ENCODE measurements at regions of chr13 and their contacts with region 1.

Region 1: DNA sequence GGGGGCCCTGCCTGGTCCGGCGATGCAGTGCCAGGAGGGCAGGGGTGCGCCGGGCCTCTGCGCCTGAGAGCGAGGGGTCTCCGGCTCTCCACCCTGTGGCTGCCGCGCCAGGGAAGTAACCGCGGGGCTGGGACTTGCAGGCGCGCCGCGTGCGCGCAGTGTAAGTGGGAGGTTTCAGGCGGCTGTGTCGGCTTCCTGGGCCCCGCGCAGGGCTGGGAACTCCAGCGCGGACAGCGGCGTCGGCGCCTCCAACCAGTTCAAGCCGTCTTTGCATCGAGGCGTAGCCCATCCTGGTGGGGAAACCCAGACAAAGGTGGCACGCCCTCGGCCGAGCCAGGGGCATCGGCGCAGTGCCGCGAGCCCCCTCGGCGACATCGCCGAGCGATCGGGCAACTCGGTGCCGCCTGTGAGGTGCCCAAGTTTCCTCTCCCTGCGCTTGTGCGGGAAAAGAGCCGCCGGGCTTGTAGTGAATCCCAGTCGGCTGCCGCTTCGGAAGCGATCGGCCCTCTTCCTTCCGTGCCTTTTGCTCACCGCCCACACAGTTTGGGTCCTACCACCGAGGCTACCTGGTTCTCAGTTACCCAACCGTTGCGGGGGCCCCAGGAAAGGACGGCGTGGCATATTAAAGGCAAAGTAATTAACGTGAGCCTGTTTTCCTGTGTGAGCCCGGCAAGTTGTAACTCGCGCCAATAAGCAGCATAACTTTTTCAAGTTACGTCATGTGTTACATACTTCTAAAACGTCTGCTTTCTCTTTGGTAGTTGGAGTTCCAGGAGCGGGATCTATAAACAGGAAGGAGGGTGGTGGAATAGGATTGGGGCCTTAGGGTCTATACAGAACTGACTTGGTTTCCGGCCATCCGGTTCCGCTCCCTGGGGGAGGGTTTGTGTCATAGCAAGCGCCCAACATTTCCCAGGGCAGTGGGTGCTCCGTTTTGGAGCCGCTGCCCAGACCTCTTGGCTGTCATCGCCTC is 1.2 kb downstream of the LRCH1 start:
- DNase-seq: peak; percentile 88
- ATAC-seq: peak; percentile 56
- H3K4me3 ChIP-seq: peak overlapping the region; percentile 87 to 97 (median 95)
- H3K4me3 Mint-ChIP-seq: peak overlapping the region; percentile 95
- H3K27ac ChIP-seq: peak overlapping the region; percentile 89 to 95
- H3K27ac Mint-ChIP-seq: peak overlapping the region; percentile 93
- H3K4me1 ChIP-seq: peaks cover 32 to 34% of the 10 kb centered on the region in 2 donors
- H3K4me1 Mint-ChIP-seq: peaks cover 55% of the 10 kb centered on the region
- H3K27me3 ChIP-seq: no peaks in the 10 kb centered on the region
- H3K27me3 Mint-ChIP-seq: no peaks in the 10 kb centered on the region
- CTCF ChIP-seq: peak; percentile 35

Region 2: GRCh38 chr13:46492946-46493345 is 61.2 kb before region 1 on chr13:
- CTCF ChIA-PET with region 1: interaction called, 11 read pairs
- POLR2A ChIA-PET with region 1: no interaction called
- intact Hi-C with region 1: loop called (anchors 5 kb)
- DNase-seq: peak; percentile 56
- ATAC-seq: no peak
- H3K4me3 ChIP-seq: no peak overlapping the region
- H3K4me3 Mint-ChIP-seq: no peak overlapping the region
- H3K27ac ChIP-seq: no peak overlapping the region
- H3K27ac Mint-ChIP-seq: no peak overlapping the region
- H3K4me1 ChIP-seq: no peaks in the 10 kb centered on the region
- H3K4me1 Mint-ChIP-seq: no peaks in the 10 kb centered on the region
- H3K27me3 ChIP-seq: no peaks in the 10 kb centered on the region
- H3K27me3 Mint-ChIP-seq: no peaks in the 10 kb centered on the region
- CTCF ChIP-seq: peak; percentile 83

Region 3: DNA sequence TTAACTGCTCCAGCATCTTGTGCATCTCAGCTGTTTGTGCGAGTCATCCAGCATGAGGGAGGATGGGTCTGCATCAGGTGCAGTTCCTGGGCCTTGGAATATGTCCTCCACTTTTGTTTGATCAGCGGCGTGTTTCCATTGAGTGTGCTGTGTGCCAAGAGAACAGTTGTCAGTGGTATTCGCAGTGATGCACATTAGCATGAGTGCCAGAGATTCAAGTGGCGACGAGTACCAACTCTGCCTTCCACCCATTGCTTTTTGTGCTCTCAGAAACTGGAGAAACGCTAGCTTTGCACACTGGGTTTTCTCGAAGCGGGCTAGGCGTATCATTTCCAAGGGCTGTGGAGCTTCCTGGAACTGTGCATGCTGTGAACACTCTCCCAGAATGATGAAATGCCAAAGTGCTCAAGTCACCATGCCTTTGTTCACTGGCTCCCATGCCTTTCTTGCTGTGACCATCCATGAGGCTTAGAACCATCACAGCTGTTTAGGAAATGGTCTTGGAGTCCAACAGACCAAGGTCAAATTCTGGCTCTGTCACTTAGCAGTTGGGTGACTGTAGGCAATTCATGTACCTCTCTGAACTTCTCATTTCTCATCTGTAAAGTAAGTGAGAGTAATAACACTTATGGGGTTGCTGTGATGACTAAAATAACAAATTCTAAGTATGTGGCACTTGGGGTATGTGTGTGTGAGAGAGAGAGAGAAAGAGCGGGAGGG is 17.2 kb after region 1 on chr13:
- CTCF ChIA-PET with region 1: interaction called, 30 read pairs
- POLR2A ChIA-PET with region 1: interaction called, 5 read pairs
- intact Hi-C with region 1: no loop called
- DNase-seq: no peak
- ATAC-seq: no peak
- H3K4me3 ChIP-seq: no peak overlapping the region
- H3K4me3 Mint-ChIP-seq: peak overlapping the region; percentile 15
- H3K27ac ChIP-seq: no peak overlapping the region
- H3K27ac Mint-ChIP-seq: peak overlapping the region; percentile 44
- H3K4me1 ChIP-seq: peaks cover 61 to 69% of the 10 kb centered on the region in 2 donors
- H3K4me1 Mint-ChIP-seq: peaks cover 82% of the 10 kb centered on the region
- H3K27me3 ChIP-seq: no peaks in the 10 kb centered on the region
- H3K27me3 Mint-ChIP-seq: no peaks in the 10 kb centered on the region
- CTCF ChIP-seq: no peak

Region 4: DNA sequence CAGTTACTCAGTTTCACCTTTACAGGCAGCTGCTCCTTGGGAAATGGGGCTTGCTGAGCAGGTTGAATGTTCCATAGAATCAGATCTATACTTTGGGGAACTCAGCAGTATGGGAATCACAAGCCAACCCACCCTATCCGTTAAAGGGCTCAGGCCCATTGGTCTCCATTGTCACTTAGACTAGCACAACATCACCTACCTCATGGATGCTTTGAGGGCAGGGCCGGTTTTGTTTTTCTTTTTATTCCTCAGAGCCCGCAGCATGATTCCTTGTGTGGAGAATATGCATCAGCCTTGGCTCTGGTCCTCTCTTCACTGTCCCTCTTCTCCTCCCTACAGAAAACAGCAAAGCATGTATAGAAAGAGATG is 46.8 kb after region 1 on chr13:
- CTCF ChIA-PET with region 1: interaction called, 32 read pairs
- POLR2A ChIA-PET with region 1: interaction called, 5 read pairs
- intact Hi-C with region 1: loop called (anchors 2 kb)
- DNase-seq: no peak
- ATAC-seq: no peak
- H3K4me3 ChIP-seq: no peak overlapping the region
- H3K4me3 Mint-ChIP-seq: peak overlapping the region; percentile 42
- H3K27ac ChIP-seq: peak overlapping the region in 1 of 2 donors; percentile 2
- H3K27ac Mint-ChIP-seq: peak overlapping the region; percentile 68
- H3K4me1 ChIP-seq: peaks cover 84 to 89% of the 10 kb centered on the region in 2 donors
- H3K4me1 Mint-ChIP-seq: peaks cover 90% of the 10 kb centered on the region
- H3K27me3 ChIP-seq: no peaks in the 10 kb centered on the region
- H3K27me3 Mint-ChIP-seq: no peaks in the 10 kb centered on the region
- CTCF ChIP-seq: no peak

Region 5: GRCh38 chr13:46655377-46656180 is 101.4 kb after region 1 on chr13:
- CTCF ChIA-PET with region 1: interaction called, 10 read pairs
- POLR2A ChIA-PET with region 1: no interaction called
- intact Hi-C with region 1: no loop called
- DNase-seq: no peak
- ATAC-seq: no peak
- H3K4me3 ChIP-seq: peak overlapping the region in 1 of 5 experiments; percentile 9
- H3K4me3 Mint-ChIP-seq: peak overlapping the region; percentile 50
- H3K27ac ChIP-seq: peak overlapping the region; percentile 21 to 77
- H3K27ac Mint-ChIP-seq: peak overlapping the region; percentile 79
- H3K4me1 ChIP-seq: peaks cover 32 to 35% of the 10 kb centered on the region in 2 donors
- H3K4me1 Mint-ChIP-seq: peaks cover 51% of the 10 kb centered on the region
- H3K27me3 ChIP-seq: no peaks in the 10 kb centered on the region
- H3K27me3 Mint-ChIP-seq: no peaks in the 10 kb centered on the region
- CTCF ChIP-seq: no peak

Region 6: DNA sequence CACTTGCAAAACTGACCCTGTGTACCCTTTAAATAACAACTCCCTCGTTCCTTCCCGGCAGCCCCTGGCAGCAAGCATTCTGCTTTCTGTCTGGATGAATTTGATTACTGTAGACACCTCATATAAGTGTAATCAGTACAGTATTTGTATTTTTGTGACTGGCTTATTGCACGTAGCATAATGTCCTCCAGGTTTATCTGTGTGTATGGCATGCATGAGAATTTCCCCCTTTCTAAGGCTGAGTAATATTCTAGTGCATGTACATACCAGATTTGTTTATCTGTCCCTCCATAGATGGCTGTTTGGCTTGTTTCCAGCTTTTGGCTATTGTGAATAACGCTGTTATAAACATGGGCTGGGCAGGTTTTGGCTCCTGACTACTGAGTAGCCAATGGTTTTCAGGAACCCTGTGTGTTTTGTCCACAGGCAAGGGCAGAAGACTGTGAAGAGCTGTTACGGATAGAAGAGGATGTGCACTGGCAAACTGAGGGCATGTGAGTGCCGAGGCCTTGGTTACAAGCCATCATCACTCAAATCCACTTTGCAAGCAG is 144.8 kb after region 1 on chr13:
- CTCF ChIA-PET with region 1: interaction called, 43 read pairs
- POLR2A ChIA-PET with region 1: no interaction called
- intact Hi-C with region 1: no loop called
- DNase-seq: no peak
- ATAC-seq: no peak
- H3K4me3 ChIP-seq: no peak overlapping the region
- H3K4me3 Mint-ChIP-seq: no peak overlapping the region
- H3K27ac ChIP-seq: no peak overlapping the region
- H3K27ac Mint-ChIP-seq: no peak overlapping the region
- H3K4me1 ChIP-seq: no peaks in the 10 kb centered on the region
- H3K4me1 Mint-ChIP-seq: no peaks in the 10 kb centered on the region
- H3K27me3 ChIP-seq: no peaks in the 10 kb centered on the region
- H3K27me3 Mint-ChIP-seq: no peaks in the 10 kb centered on the region
- CTCF ChIP-seq: no peak

Region 7: DNA sequence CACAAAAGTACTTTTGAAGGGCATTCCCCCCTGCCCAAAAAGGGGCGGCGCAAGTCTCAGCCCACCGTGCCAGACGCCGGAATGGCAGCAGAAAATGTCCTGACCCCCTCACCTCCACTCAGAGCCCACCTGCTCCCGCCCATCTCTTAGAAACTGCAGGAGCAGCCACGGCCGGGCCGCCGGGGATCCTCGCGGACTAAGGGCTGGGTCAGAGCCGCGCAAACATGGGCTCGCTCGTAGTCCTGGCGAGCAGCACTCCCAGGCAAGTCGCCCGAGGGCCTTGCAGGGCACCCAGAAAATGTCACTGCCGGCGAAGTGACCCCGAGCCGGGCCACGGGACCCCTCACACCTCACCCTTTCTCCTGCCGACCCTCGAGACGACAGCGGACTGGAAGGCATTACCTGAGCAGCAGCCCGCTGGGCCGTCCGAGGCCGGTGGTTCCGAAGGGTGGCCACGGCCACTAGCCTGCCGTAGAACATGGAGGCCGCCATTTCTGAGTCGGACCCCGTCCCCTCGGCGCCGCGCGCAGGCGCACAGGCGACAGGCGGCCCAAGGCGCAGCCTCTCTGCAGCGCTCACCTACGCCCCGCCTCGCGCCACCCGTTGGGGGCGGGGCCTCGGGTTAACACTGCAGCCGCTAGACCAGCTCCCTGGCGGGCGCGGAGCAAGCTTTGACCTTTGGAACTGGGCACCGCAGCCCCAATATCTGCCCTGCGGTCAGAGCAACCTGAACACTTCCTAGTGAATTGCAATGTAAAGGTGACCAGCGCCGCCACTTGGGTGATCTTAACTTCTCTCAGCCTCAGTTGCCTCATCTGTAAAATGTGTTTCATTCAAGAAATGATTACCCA is 1446.8 kb after region 1 on chr13 and contains the start of gene SUCLA2:
- CTCF ChIA-PET with region 1: no interaction called
- POLR2A ChIA-PET with region 1: no interaction called
- intact Hi-C with region 1: loop called (anchors 2 kb)
- DNase-seq: peak; percentile 90
- ATAC-seq: peak; percentile 100
- H3K4me3 ChIP-seq: peak within 1 kb of the TSS; percentile 72 to 89 (median 79)
- H3K4me3 Mint-ChIP-seq: peak within 1 kb of the TSS; percentile 95
- H3K27ac ChIP-seq: peak within 1 kb of the TSS; percentile 43 to 82
- H3K27ac Mint-ChIP-seq: peak within 1 kb of the TSS; percentile 72
- H3K4me1 ChIP-seq: peaks cover 13% of the 10 kb centered on the region in 2 donors
- H3K4me1 Mint-ChIP-seq: peaks cover 30% of the 10 kb centered on the region
- H3K27me3 ChIP-seq: no peaks in the 10 kb centered on the region
- H3K27me3 Mint-ChIP-seq: no peaks in the 10 kb centered on the region
- CTCF ChIP-seq: no peak
- total RNA-seq, gene SUCLA2: 33.7 and 33.9 TPM in 2 replicates